ENCODE measurements at regions of chr6 and their contacts with region 1.

Region 1: DNA sequence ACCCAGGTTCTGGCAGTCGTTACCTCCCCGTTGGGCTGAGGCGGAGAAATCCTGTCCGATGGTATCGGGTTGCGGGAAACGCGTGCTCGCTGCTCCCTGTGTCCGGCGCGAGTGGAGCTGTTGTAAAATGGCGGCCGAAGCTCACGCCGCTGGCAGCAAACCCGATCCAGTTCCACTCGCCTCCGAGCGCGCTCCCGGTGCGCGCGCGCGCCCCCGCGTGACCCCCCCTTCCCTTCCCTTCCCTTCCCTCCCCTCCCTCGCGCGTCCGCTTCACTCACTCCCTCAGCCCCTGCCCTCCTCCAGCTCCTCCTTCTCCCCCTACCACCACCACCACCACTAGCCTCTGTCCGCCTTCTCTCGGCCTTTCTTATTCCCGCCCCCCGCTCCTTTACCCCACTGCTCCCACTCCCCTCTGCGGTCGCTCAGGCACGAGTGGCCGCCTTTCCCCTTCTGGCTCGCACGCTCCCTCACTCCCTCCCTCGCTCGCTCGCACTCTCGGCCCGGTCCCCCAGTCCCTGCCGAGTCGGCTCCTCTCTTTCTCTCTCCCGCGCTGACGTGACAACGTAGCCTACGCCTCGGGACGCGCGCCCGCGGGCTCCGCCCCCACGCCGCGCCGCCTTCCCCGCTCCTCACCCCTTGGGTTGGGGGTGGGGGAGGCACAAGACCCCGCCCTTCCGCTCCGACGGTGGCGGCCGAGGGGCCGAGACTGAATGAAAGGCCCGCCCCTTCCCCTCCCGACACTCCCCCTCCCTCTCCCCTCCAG is at the start of gene SYNCRIP:
- DNase-seq: peak; percentile 99 to 100 (median 99)
- ATAC-seq: peak; percentile 89
- H3K4me3 ChIP-seq: peak within 1 kb of the TSS; percentile 94 to 97
- H3K27ac ChIP-seq: peak within 1 kb of the TSS; percentile 98 to 99
- H3K4me1 ChIP-seq: peaks cover 21 to 47% of the 10 kb centered on the region in 2 donors
- H3K27me3 ChIP-seq: no peaks in the 10 kb centered on the region
- CTCF ChIP-seq: no peak
- polyA plus RNA-seq, gene SYNCRIP: 153 to 182 (median 163) TPM

Region 2: GRCh38 chr6:85580882-85581267 is 62.1 kb before region 1 on chr6:
- intact Hi-C with region 1: no loop called
- DNase-seq: no peak
- ATAC-seq: peak; percentile 34
- H3K4me3 ChIP-seq: no peak overlapping the region
- H3K27ac ChIP-seq: no peak overlapping the region
- H3K4me1 ChIP-seq: peaks cover 0 to 19% of the 10 kb centered on the region in 2 donors
- H3K27me3 ChIP-seq: no peaks in the 10 kb centered on the region
- CTCF ChIP-seq: no peak

Region 3: DNA sequence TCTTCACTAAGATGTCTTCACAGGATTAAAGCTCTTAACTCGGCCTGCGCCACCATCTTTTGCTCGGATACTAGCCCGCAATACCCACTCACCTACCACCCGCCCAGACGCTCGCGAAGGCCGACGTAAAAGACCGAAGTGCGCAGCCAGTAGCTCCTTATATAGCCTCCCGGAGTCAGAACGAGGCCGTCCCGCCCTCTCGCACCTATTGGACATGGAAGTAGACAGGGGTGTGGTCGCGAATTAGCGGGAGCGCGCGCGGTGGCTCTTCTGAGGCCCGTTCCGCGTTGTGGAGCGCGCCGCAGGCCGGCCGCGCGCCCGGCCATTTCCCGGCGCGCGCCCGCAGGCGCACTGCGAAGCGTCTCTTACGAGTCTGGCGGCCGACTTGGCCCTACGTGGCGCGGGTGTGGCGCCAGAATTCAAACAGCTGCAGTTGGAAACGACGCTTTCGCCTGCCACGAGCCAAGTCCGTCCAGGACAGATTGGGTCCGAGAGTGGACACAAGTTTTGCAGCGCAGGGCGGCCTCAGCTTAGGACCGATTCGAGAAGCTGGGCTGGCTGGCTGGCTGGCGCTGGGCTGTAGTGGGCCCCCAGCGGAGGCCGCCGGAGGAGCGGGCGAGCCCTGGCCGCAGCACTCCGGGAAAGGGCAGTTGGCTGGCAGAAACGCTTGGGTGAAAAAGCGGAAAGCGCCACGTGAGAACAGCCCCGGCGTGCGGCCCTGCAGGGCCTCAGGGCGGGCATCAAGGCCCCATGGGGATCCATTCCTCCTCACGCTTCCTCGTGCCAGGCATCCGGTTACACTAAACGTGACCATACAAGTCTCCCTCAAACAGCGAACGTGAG is 35.9 kb after region 1 on chr6:
- intact Hi-C with region 1: loop called in 1 of 2 experiments (anchors 5 kb)
- DNase-seq: peak; percentile 98 to 100 (median 98)
- ATAC-seq: peak; percentile 98
- H3K4me3 ChIP-seq: peak overlapping the region; percentile 65 to 73
- H3K27ac ChIP-seq: peak overlapping the region; percentile 89 to 95
- H3K4me1 ChIP-seq: peaks cover 9 to 39% of the 10 kb centered on the region in 2 donors
- H3K27me3 ChIP-seq: no peaks in the 10 kb centered on the region
- CTCF ChIP-seq: no peak

Region 4: DNA sequence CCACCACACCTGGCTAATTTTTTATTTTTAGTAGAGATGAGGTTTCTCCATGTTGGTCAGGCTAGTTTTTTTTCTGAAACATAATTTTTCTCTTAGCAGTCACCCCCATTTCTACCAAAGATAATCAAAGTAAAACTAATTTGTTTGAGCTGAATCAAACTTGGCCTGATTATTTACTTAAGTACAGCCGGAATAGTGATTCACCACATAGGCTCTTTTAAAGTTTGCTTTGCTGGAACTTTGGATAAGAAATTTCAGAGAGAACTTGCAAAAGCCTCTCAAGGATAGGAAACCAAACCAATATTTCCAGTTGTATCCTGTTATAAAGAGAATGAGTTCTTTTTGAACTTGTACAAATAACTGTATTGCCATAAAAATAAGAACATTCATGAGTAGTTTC is 104.7 kb after region 1 on chr6:
- intact Hi-C with region 1: no loop called
- DNase-seq: peak in 1 of 4 donors; percentile 16
- ATAC-seq: peak; percentile 75
- H3K4me3 ChIP-seq: no peak overlapping the region
- H3K27ac ChIP-seq: peak overlapping the region in 1 of 2 donors; percentile 45
- H3K4me1 ChIP-seq: peaks cover 0 to 4% of the 10 kb centered on the region in 2 donors
- H3K27me3 ChIP-seq: no peaks in the 10 kb centered on the region
- CTCF ChIP-seq: no peak